ENCODE measurements at regions of chr1 and their contacts with region 1.

Region 1: GRCh38 chr1:58896246-58897183 is 112.7 kb upstream of the JUN start:
- DNase-seq: no peak

Region 2: DNA sequence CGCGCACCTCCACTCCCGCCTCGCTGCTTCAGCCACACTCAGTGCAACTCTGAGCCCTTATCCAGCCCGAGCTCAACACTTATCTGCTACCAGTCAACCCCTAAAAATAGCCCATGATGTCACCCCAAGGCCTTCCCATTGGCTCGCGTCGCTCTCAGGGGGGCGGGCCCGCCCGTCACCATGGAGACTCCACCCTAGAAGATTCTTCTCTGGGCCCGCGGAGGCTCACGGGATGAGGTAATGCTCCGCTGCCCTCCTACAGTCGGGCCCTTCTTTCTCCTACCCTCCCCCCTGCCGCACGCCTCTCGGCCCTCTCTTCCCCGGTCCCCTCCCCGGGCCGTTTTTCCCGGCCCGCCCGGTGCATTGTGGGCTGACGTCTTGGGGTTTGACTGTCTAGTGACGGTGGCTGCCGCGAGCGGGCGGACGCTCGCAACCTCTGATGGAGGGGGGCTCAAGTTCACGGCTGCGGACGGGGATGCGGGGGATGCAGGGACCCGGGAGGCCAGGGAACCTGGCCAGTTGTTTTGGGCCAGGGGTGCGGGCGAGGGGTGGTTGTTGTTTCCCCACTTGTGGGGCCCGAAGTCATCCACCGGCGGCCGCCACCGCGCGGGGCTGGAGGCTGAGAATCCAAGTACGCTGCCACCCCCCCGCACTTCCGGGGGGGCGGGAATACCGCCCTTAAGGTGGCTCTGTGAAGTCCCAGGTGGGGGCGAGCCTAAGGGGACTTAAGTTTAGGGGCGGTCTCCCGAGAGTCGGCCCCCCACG is 112.3 kb before region 1 on chr1 and contains the start of gene JUN:
- intact Hi-C with region 1: loop called in 1 of 2 experiments (anchors 10 kb)
- DNase-seq: peak; percentile 100
- total RNA-seq, gene JUN: 120 to 219 TPM

Region 3: DNA sequence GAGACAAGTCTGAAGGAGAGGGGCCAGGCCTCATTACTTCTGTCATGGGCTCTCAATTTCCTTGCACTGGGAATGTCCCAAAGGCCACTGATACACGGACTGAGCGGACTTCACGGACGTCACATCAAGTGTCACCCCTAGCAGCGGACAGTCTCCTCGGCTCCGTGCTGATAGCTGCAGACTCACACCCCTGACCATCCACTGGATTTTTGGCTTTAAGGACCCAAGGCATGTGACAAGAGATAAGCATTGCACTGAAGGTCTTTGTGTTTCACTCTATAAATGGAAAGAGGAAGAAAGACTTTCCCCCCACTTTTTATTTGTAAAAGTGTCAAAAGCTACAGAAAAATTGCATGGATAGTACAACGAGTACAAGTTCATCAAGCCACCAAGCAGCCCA is 200.0 kb after region 1 on chr1:
- intact Hi-C with region 1: no loop called
- DNase-seq: no peak

Measured in posterior vena cava (tissue), 2 donors.